Transverse colon (tissue), 4 donors: ENCODE measurements at regions of chr11 and their contacts with region 1.

Region 1: DNA sequence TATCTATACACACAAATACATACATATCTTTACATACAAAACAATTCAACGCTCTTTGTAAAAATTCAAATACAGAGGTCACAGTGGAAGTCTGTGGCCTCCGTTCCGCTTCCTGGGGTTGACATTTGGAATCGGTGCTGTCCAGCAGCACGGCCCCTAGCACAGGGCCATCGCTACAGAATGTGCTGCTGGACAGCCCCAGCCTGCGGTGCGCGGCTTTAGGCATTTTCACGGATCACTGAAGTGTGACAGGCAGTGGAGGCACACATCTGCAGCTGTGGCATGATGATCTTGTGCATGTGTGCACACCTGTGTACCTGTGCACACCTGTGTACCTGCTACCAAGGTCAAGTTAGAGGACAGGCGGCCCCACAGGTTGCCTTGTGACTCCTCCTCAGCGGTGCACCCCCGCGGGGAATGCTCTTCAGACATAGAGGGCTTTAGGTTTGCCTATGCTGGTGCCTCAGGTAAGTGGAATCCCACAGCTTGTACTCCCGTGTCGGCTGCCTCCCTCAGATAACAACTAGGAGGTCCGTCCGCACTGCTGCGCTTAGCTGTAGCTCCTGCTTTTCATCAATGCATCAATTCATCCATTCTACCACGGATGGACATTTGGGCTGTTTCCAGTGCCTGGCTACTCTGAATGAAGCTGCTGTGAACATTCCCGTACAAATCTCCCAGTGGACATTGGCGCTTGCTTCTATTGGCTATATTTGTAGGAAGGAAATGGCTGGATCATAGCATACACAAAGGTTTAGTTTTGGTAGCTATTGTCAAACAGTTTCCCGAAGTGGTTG is 29.9 kb downstream of the GAL start:
- DNase-seq: no peak
- H3K4me3 ChIP-seq: no peak overlapping the region
- H3K27ac ChIP-seq: no peak overlapping the region
- H3K4me1 ChIP-seq: no peaks in the 10 kb centered on the region
- H3K27me3 ChIP-seq: no peaks in the 10 kb centered on the region
- CTCF ChIP-seq: no peak
- EP300 ChIP-seq: no peak
- POLR2A ChIP-seq: no peak

Region 2: GRCh38 chr11:68692871-68693483 is 21.3 kb before region 1 on chr11:
- in situ Hi-C with region 1: no loop called
- intact Hi-C with region 1: loop called (anchors 1 kb)
- DNase-seq: no peak
- H3K4me3 ChIP-seq: no peak overlapping the region
- H3K27ac ChIP-seq: no peak overlapping the region
- H3K4me1 ChIP-seq: no peaks in the 10 kb centered on the region
- H3K27me3 ChIP-seq: peaks cover 37% of the 10 kb centered on the region
- CTCF ChIP-seq: no peak
- EP300 ChIP-seq: no peak
- POLR2A ChIP-seq: no peak